GM10248 (cell line): ENCODE measurements at regions of chr11 and their contacts with region 1.

Region 1: GRCh38 chr11:130894322-130895025 is 21.8 kb downstream of the SNX19 start:
- DNase-seq: peak; percentile 55
- CTCF ChIP-seq: peak; percentile 87

Region 2: DNA sequence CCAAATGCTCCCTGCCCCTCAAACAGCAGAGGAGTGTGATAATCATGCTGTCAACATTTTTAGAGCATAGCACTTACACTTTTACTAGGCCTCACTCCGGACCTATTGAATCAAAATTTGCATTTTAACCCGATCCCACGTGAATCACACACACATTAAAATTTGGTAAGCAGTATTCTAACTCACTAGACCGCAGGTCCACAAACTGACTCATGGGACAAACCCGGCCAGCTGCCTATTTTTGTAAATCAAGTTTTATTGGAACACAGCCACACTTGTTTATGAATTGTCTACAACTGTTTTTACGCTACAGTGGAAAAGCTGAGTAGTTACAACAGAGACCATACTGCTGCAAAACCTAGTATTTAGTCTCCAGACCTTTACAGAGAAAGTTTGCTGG is 21.5 kb before region 1 on chr11:
- CTCF ChIA-PET with region 1: interaction called, 29 read pairs
- POLR2A ChIA-PET with region 1: no interaction called
- DNase-seq: no peak
- CTCF ChIP-seq: no peak

Region 3: DNA sequence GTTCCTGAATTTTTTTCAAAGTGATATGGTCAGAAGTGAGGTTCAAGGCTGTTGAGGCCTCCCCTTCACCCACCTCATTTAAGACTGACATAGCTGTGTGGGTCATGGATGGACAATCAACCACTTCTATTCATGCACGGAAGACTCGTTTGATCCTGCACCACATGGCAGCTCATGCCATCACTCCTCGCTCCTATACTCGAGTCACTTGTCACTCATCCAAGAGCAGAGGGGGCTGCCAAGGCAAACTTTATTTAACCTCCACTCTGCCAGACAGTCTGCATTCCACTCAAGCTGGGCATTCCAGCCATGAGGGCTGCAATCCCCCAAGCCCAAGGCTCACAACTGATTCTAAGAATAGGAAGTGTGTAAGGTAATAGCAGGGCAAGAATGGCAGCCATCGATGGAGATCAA is 12.3 kb before region 1 on chr11:
- CTCF ChIA-PET with region 1: interaction called, 40 read pairs
- POLR2A ChIA-PET with region 1: no interaction called
- DNase-seq: no peak
- CTCF ChIP-seq: no peak

Region 4: DNA sequence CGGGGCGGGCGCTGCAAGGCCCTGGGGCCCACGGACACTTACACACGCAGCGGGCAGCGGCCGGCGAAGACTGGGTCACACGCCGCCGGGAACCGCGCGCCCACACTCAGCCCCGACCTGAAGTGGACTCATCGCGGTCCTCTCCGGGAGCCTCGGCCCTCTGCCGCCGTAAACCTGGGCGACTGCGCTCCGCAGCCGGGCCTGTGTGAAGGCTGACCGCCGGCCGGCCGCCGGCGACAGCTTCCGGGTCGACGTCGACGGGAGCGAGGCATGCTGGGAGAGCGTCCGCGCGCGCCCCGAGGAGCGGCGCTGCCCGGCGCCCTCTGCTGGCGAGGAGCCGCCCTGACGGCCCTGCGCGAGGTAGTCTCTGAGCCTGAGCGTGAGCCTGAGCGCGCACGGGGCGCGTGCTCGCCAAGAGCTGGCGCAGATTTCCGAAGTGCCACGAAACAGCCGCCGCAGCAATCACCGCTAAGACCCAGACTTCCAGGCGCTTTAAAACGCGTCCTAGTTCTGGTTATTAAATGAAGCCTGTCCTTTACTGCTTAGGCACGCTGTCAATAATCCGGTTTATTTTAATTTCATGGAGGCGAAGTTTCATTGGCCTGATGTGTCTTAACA is 21.9 kb after region 1 on chr11 and contains the start of gene SNX19:
- CTCF ChIA-PET with region 1: interaction called, 70 read pairs
- POLR2A ChIA-PET with region 1: no interaction called
- DNase-seq: peak; percentile 95
- CTCF ChIP-seq: peak; percentile 95

Region 5: GRCh38 chr11:130947889-130948288 is 53.4 kb after region 1 on chr11:
- CTCF ChIA-PET with region 1: no interaction called
- POLR2A ChIA-PET with region 1: no interaction called
- DNase-seq: no peak
- CTCF ChIP-seq: no peak